ENCODE measurements at regions of chr1 and their contacts with region 1.

Region 1: DNA sequence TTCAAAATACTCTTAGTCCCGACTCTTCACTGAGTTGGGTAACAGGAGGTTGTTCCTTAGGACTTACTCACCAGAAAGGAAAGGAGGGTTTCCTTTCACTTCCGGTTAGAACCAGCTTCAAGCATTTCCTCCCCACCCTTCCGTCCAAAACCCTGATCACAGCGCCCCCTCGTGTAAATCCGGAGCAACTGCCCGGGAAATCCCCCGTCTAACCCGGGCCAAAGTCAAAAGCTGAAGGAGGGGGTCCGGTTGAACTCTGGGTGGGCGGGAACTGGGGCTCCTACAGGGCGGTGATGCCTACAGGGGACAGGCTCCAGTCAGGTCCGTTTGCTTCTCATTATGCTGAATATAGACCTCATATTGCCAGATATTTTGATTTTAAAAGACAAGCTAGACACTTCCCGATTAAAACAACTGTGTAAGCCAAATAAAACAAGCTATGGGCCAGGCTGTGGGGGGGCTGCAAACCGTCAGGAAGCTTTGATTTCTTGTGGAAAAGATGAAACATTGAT is 15.0 kb upstream of the MTARC2 start:
- DNase-seq: peak; percentile 83
- H3K4me3 ChIP-seq: peak overlapping the region in 1 of 3 experiments; percentile 14
- H3K27ac ChIP-seq: peak overlapping the region; percentile 22
- H3K4me1 ChIP-seq: peaks cover 19% of the 10 kb centered on the region
- H3K27me3 ChIP-seq: no peaks in the 10 kb centered on the region
- CTCF ChIP-seq: peak; percentile 75 to 86

Region 2: DNA sequence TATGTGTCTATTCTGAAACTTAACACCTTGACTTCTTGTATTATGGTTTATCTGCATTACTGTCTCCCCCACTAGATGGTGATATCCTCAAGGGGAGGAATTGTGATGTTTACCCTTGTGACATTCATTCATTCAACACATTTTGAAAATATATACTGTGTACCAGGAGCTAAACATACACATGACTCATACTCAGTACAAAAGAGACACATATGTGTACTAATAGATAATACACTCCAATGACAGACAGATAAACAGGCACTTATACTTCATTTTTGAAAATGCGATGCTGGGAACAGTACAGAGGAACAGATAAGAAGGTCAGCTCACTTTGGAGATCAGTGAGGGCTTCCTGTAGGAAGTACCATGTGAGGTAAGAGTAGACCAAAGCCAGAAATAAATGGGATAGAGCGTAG is 452.0 kb before region 1 on chr1:
- CTCF ChIA-PET with region 1: interaction called, 3 read pairs
- dilution Hi-C with region 1: no loop called
- in situ Hi-C with region 1: no loop called
- intact Hi-C with region 1: loop called (anchors 2 kb)
- DNase-seq: peak; percentile 32
- H3K4me3 ChIP-seq: no peak overlapping the region
- H3K27ac ChIP-seq: no peak overlapping the region
- H3K4me1 ChIP-seq: no peaks in the 10 kb centered on the region
- H3K27me3 ChIP-seq: no peaks in the 10 kb centered on the region
- CTCF ChIP-seq: peak; percentile 62 to 63

Region 3: GRCh38 chr1:220300442-220301121 is 432.6 kb before region 1 on chr1:
- CTCF ChIA-PET with region 1: interaction called, 15 read pairs
- dilution Hi-C with region 1: no loop called
- in situ Hi-C with region 1: loop called in 1 of 2 experiments (anchors 10 kb)
- intact Hi-C with region 1: loop called (anchors 1 kb)
- DNase-seq: peak; percentile 76
- H3K4me3 ChIP-seq: no peak overlapping the region
- H3K27ac ChIP-seq: peak overlapping the region; percentile 30
- H3K4me1 ChIP-seq: peaks cover 4% of the 10 kb centered on the region
- H3K27me3 ChIP-seq: no peaks in the 10 kb centered on the region
- CTCF ChIP-seq: no peak

Region 4: GRCh38 chr1:220680085-220680687 is 53.0 kb before region 1 on chr1:
- CTCF ChIA-PET with region 1: no interaction called
- dilution Hi-C with region 1: no loop called
- in situ Hi-C with region 1: no loop called
- intact Hi-C with region 1: loop called (anchors 1 kb)
- DNase-seq: peak; percentile 32
- H3K4me3 ChIP-seq: no peak overlapping the region
- H3K27ac ChIP-seq: no peak overlapping the region
- H3K4me1 ChIP-seq: no peaks in the 10 kb centered on the region
- H3K27me3 ChIP-seq: no peaks in the 10 kb centered on the region
- CTCF ChIP-seq: peak; percentile 57 to 83

Measured in mammary epithelial cell (primary cell).